ENCODE measurements at regions of chr16 and their contacts with region 1.

Region 1: DNA sequence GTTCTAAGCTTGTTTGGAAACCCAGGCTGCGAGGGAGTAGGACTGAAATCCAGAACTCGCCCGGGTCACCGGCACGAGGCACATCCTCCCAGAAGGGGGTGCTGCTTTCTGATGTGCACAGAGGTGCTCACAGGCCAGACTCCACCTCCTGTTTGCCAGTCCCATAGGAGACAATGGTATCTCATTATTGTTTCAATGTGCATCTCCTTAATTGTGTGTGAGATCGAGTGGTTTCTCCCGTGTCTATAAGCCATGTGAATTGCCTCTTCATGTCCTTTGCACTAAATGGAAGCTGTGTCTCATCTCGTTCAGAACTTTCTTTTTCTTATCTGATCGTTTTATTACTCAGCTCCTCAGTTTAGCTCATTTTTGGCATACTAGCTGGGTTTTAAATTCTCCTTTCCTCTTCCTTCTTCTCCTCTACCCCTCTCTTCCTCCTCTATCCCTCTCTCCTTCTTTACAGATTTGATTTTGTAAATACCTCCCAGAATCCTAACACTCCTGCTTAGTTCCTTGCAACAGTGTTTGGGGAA is 32.1 kb upstream of the PRKCB start:
- DNase-seq: no peak
- H3K4me3 ChIP-seq: no peak overlapping the region
- H3K27ac ChIP-seq: no peak overlapping the region
- H3K4me1 ChIP-seq: peaks cover 0 to 9% (median 3%) of the 10 kb centered on the region in 4 donors
- H3K27me3 ChIP-seq: peaks cover 0 to 19% (median 0%) of the 10 kb centered on the region in 4 donors
- CTCF ChIP-seq: peak; percentile 43 to 48 (median 48)
- EP300 ChIP-seq: no peak
- POLR2A ChIP-seq: no peak

Region 2: GRCh38 chr16:23712976-23713375 is 90.7 kb before region 1 on chr16 and contains the start of gene ERN2:
- intact Hi-C with region 1: no loop called
- DNase-seq: no peak
- H3K4me3 ChIP-seq: no peak within 1 kb of the TSS
- H3K27ac ChIP-seq: no peak within 1 kb of the TSS
- H3K4me1 ChIP-seq: no peaks in the 10 kb centered on the region
- H3K27me3 ChIP-seq: peaks cover 0 to 71% (median 3%) of the 10 kb centered on the region in 4 donors
- CTCF ChIP-seq: no peak
- EP300 ChIP-seq: no peak
- POLR2A ChIP-seq: no peak
- total RNA-seq, gene ERN2: 0.11 TPM in 1 of 4 donors, not detected in the others

Region 3: GRCh38 chr16:24010440-24011089 is 206.9 kb after region 1 on chr16:
- intact Hi-C with region 1: loop called (anchors 2 kb)
- DNase-seq: no peak
- H3K4me3 ChIP-seq: no peak overlapping the region
- H3K27ac ChIP-seq: no peak overlapping the region
- H3K4me1 ChIP-seq: no peaks in the 10 kb centered on the region
- H3K27me3 ChIP-seq: no peaks in the 10 kb centered on the region
- CTCF ChIP-seq: peak; percentile 68 to 75 (median 71)
- EP300 ChIP-seq: no peak
- POLR2A ChIP-seq: no peak

Region 4: DNA sequence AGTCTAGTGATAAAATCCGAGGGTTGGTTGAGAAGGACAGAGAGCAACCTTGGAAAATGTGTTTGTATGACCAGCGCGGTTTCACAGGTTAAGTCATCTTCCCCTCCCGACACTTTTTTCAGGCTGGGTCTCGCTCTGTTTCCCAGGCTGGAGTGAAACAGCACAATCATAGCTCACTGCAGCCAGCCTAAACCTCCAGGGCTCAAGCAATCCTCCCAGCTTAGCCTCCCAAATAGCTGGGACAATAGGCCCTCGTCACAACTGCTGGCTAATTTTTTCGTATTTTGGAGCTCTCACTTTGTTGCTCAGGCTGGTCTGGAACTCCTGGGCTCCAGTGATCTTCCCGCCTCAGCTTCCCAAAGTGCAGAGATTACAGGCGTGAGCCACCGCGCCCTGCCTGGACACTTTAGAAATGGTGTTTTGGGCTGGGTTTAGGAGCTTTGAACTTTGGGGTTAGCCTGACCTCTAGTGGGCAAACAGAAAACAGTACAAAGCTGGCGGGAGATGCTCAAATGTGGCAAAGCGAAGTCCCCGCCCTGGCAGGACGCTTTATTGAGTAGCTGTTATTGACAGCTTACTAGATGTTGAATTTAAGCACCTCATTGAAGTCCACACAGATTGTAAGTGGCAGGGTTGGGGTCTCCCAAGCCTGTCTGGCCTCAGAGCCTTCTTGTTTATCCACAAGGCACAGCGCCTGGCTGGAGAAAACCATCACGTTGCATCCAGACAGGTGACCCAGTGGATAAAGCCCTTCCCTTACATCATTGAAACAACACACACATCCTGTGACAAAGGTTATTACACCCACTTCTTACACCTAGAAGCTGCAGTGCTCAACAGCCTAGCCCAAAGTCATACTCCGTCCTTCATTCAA is 701.1 kb after region 1 on chr16:
- intact Hi-C with region 1: loop called (anchors 10 kb)
- DNase-seq: no peak
- H3K4me3 ChIP-seq: no peak overlapping the region
- H3K27ac ChIP-seq: no peak overlapping the region
- H3K4me1 ChIP-seq: no peaks in the 10 kb centered on the region
- H3K27me3 ChIP-seq: peaks cover 0 to 17% (median 0%) of the 10 kb centered on the region in 4 donors
- CTCF ChIP-seq: peak; percentile 62 to 76 (median 68)
- EP300 ChIP-seq: no peak
- POLR2A ChIP-seq: no peak